ENCODE measurements at regions of chr19 and their contacts with region 1.

Region 1: DNA sequence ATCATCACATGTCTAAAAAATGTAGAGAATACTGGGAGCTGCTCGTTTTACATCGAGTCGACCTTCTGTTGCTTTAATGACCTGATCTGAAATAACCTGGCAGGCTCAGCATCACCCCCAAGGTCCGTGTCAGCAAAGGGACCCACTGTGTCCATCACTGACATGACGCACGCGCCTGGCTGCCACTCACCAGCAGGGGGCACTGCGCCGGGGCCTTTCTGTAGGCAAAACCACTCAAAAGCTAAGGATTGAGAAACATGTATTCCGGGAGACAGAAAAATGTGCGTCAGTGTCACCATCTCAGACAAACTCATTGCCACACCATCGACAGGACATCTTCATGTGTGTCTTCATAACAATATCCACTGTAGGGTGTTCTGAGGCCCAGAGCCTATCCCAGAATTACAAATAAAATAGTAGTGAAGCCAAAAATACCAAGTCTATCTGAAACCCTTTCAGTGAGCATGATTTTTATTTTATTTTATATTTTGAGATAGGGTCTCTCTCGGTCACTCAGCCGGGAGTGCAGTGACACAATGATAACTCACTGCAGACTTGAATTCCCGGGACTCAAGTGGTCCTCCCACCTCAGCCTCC is 130.3 kb upstream of the LSM14A start:
- DNase-seq: peak; percentile 36
- ATAC-seq: peak; percentile 78
- H3K4me3 ChIP-seq: no peak overlapping the region
- H3K27ac ChIP-seq: no peak overlapping the region
- H3K4me1 ChIP-seq: no peaks in the 10 kb centered on the region
- H3K27me3 ChIP-seq: no peaks in the 10 kb centered on the region
- CTCF ChIP-seq: peak; percentile 85
- EP300 ChIP-seq: no peak
- POLR2A ChIP-seq: no peak
- RAD21 ChIP-seq: 0 out of 2 replicates have a peak, but pooled peaks have one; percentile 33

Region 2: GRCh38 chr19:33982706-33983105 is 59.3 kb before region 1 on chr19:
- CTCF ChIA-PET with region 1: no interaction called
- POLR2A ChIA-PET with region 1: no interaction called
- in situ Hi-C with region 1: no loop called
- intact Hi-C with region 1: no loop called
- DNase-seq: no peak
- ATAC-seq: no peak
- H3K4me3 ChIP-seq: no peak overlapping the region
- H3K27ac ChIP-seq: no peak overlapping the region
- H3K4me1 ChIP-seq: no peaks in the 10 kb centered on the region
- H3K27me3 ChIP-seq: no peaks in the 10 kb centered on the region
- CTCF ChIP-seq: no peak
- EP300 ChIP-seq: no peak
- POLR2A ChIP-seq: no peak
- RAD21 ChIP-seq: no peak

Region 3: DNA sequence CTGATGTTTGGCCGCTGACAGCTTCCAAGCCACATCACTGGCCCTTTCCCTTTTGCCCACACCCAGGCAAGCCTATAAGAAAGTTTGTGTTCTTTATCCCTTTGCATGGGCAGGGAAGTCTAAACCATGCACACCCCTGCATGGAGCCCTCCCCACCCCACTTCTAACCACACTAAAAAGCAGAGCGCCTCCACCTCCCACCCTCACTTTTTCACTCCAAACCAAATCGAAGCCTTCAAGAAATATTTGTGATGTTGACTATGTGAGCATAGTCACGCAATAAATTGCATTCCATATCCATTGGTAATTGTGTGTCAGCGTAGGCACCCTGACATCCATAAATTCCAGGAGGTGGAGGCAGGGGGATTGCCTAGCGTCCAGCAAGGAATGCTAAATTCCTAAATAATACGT is 25.8 kb after region 1 on chr19:
- CTCF ChIA-PET with region 1: no interaction called
- POLR2A ChIA-PET with region 1: no interaction called
- in situ Hi-C with region 1: no loop called
- intact Hi-C with region 1: no loop called
- DNase-seq: no peak
- ATAC-seq: no peak
- H3K4me3 ChIP-seq: no peak overlapping the region
- H3K27ac ChIP-seq: no peak overlapping the region
- H3K4me1 ChIP-seq: no peaks in the 10 kb centered on the region
- H3K27me3 ChIP-seq: peaks cover 0 to 15% of the 10 kb centered on the region in 2 experiments; a peak in 4 of 5 replicates
- CTCF ChIP-seq: no peak
- EP300 ChIP-seq: no peak
- POLR2A ChIP-seq: no peak
- RAD21 ChIP-seq: no peak

Region 4: GRCh38 chr19:34096020-34096915 is 54.2 kb after region 1 on chr19:
- CTCF ChIA-PET with region 1: interaction called, 9 read pairs
- POLR2A ChIA-PET with region 1: no interaction called
- in situ Hi-C with region 1: no loop called
- intact Hi-C with region 1: loop called (anchors 2 kb)
- DNase-seq: peak; percentile 41
- ATAC-seq: no peak
- H3K4me3 ChIP-seq: no peak overlapping the region
- H3K27ac ChIP-seq: no peak overlapping the region
- H3K4me1 ChIP-seq: no peaks in the 10 kb centered on the region
- H3K27me3 ChIP-seq: peaks cover 0 to 15% of the 10 kb centered on the region in 2 experiments; a peak in 2 of 5 replicates
- CTCF ChIP-seq: peak; percentile 58
- EP300 ChIP-seq: no peak
- POLR2A ChIP-seq: no peak
- RAD21 ChIP-seq: peak; percentile 39; the same call in 1 of the 2 replicates